Calu3 (cell line): ENCODE measurements at regions of chr1 and their contacts with region 1.

Region 1: GRCh38 chr1:245585252-245585959 is 430.6 kb downstream of the KIF26B start:
- DNase-seq: peak; percentile 38
- H3K4me3 Mint-ChIP-seq: no peak overlapping the region
- H3K27ac Mint-ChIP-seq: no peak overlapping the region
- H3K4me1 Mint-ChIP-seq: no peaks in the 10 kb centered on the region
- H3K27me3 Mint-ChIP-seq: no peaks in the 10 kb centered on the region
- CTCF ChIP-seq: no peak

Region 2: DNA sequence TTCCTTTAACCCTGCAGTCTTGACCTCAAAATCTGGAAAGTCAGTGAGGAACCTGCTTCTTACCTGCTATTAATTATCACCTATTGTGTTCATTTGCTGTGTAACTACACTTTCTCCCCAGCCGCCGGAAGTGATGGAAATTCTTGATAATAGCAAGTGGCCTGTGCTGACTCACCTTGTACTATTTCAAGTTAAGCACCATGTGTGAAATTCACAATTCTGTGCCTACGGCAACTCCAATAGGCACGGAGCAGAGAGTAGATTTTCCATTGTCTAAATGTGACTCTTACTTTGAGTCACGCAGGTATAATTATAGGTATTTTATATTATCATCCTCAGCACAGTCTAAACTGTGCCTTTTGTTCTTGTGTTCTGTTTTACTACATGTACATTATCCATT is 36.2 kb after region 1 on chr1:
- CTCF ChIA-PET with region 1: interaction called, 10 read pairs
- intact Hi-C with region 1: no loop called
- DNase-seq: no peak
- H3K4me3 Mint-ChIP-seq: no peak overlapping the region
- H3K27ac Mint-ChIP-seq: no peak overlapping the region
- H3K4me1 Mint-ChIP-seq: no peaks in the 10 kb centered on the region
- H3K27me3 Mint-ChIP-seq: no peaks in the 10 kb centered on the region
- CTCF ChIP-seq: no peak

Region 3: DNA sequence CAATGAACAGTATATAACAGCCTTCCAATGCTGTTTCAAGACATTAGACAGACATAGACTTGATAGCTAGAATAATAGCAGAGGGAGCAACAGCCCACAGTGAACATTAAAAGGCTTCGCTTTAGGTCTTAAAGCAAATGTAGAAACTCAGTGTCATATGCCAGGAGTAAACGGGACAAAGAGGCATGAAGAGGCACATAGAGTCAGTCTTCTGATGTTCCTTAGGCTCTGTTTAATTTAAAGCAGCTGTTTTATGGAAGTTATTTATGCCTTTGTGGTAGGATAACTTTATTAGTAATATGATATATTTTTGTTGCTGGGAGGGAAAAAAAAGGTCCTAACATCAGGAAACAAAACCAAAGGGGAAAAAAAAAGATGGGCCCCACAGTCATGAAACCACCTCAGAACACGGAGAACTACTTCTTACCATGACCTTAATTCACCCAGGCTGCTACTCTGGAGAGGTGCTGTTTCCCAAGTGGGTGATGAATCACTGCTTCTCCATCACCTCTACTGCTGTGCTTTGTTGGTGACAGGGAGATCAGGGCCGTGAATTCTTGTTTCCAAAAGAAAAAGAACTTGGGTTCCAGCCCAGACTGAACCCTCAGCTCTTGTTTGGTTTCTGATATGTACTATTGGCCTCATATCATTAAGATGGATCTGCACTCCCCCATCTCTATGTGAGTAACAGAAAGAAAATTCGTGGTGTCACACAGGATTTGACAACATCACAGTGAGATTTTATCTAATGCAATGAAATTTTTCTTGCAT is 186.3 kb after region 1 on chr1:
- CTCF ChIA-PET with region 1: no interaction called
- intact Hi-C with region 1: no loop called
- DNase-seq: no peak
- H3K4me3 Mint-ChIP-seq: no peak overlapping the region
- H3K27ac Mint-ChIP-seq: no peak overlapping the region
- H3K4me1 Mint-ChIP-seq: no peaks in the 10 kb centered on the region
- H3K27me3 Mint-ChIP-seq: no peaks in the 10 kb centered on the region
- CTCF ChIP-seq: no peak